ENCODE measurements at regions of chr17 and their contacts with region 1.

Region 1: GRCh38 chr17:36629252-36629847 is 28.0 kb downstream of the MRM1 start:
- DNase-seq: peak; percentile 68
- H3K4me3 Mint-ChIP-seq: no peak overlapping the region
- H3K27ac Mint-ChIP-seq: no peak overlapping the region
- H3K4me1 Mint-ChIP-seq: no peaks in the 10 kb centered on the region
- H3K27me3 Mint-ChIP-seq: peaks cover 5% of the 10 kb centered on the region

Region 2: GRCh38 chr17:36705874-36706731 is 76.8 kb after region 1 on chr17:
- intact Hi-C with region 1: loop called (anchors 5 kb)
- DNase-seq: peak; percentile 21
- H3K4me3 Mint-ChIP-seq: no peak overlapping the region
- H3K27ac Mint-ChIP-seq: no peak overlapping the region
- H3K4me1 Mint-ChIP-seq: peaks cover 1% of the 10 kb centered on the region
- H3K27me3 Mint-ChIP-seq: peaks cover 29% of the 10 kb centered on the region

Region 3: DNA sequence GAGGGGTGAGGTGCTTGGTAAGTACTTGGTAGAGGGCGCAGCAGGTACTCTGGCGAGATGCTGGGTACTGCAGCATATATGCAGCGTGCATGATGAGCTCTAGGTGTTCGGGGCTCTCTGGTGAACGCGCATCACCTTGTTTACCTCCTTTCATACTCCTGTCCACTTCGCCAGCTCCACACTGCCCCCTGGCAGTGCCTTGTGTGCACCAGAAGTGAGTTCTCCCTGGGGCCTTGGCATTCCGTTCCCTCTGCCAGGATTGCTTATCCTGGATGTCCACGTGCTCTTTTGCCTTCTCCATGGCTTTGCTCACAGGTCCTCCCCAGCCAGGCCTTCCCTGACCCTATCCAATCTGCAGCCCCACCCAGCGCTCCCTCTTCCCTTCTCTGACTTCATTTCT is 126.2 kb after region 1 on chr17:
- intact Hi-C with region 1: loop called (anchors 2 kb)
- DNase-seq: peak; percentile 41
- H3K4me3 Mint-ChIP-seq: no peak overlapping the region
- H3K27ac Mint-ChIP-seq: no peak overlapping the region
- H3K4me1 Mint-ChIP-seq: no peaks in the 10 kb centered on the region
- H3K27me3 Mint-ChIP-seq: no peaks in the 10 kb centered on the region

Region 4: GRCh38 chr17:36921095-36921851 is 291.9 kb after region 1 on chr17:
- intact Hi-C with region 1: loop called (anchors 5 kb)
- DNase-seq: no peak
- H3K4me3 Mint-ChIP-seq: no peak overlapping the region
- H3K27ac Mint-ChIP-seq: peak overlapping the region; percentile 71
- H3K4me1 Mint-ChIP-seq: peaks cover 20% of the 10 kb centered on the region
- H3K27me3 Mint-ChIP-seq: peaks cover 4% of the 10 kb centered on the region

Region 5: GRCh38 chr17:37047631-37048104 is 418.3 kb after region 1 on chr17:
- intact Hi-C with region 1: loop called (anchors 1 kb)
- DNase-seq: peak; percentile 66
- H3K4me3 Mint-ChIP-seq: no peak overlapping the region
- H3K27ac Mint-ChIP-seq: peak overlapping the region; percentile 64
- H3K4me1 Mint-ChIP-seq: peaks cover 12% of the 10 kb centered on the region
- H3K27me3 Mint-ChIP-seq: no peaks in the 10 kb centered on the region